ENCODE measurements at regions of chr14 and their contacts with region 1.

Region 1: GRCh38 chr14:64478634-64479250 is 13.4 kb downstream of the AKAP5 start:
- DNase-seq: no peak
- CTCF ChIP-seq: peak; percentile 27

Region 2: GRCh38 chr14:64345513-64345912 is 133.2 kb before region 1 on chr14:
- CTCF ChIA-PET with region 1: interaction called, 45 read pairs
- POLR2A ChIA-PET with region 1: no interaction called
- DNase-seq: no peak
- CTCF ChIP-seq: no peak

Region 3: DNA sequence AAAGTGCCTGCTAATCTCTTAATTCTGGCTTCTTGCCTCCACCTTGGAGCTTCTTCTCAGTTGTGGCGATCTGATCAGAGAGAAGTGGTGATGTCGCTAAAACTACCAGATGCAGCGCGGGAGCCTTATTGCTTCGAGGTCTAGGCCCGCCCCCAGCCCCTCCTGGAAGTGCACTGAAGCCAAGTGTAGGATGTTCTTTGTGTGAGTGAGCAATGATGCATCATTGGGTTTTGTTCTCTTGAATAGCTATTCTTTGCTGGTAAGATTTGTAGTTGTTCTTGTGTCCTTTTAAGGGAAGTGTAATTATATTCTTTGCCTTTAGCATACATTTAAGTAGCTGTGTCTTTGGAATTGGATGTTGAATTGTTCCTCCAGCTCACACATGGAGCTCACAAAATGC is 54.8 kb before region 1 on chr14:
- CTCF ChIA-PET with region 1: interaction called, 57 read pairs
- POLR2A ChIA-PET with region 1: no interaction called
- DNase-seq: no peak
- CTCF ChIP-seq: no peak

Region 4: DNA sequence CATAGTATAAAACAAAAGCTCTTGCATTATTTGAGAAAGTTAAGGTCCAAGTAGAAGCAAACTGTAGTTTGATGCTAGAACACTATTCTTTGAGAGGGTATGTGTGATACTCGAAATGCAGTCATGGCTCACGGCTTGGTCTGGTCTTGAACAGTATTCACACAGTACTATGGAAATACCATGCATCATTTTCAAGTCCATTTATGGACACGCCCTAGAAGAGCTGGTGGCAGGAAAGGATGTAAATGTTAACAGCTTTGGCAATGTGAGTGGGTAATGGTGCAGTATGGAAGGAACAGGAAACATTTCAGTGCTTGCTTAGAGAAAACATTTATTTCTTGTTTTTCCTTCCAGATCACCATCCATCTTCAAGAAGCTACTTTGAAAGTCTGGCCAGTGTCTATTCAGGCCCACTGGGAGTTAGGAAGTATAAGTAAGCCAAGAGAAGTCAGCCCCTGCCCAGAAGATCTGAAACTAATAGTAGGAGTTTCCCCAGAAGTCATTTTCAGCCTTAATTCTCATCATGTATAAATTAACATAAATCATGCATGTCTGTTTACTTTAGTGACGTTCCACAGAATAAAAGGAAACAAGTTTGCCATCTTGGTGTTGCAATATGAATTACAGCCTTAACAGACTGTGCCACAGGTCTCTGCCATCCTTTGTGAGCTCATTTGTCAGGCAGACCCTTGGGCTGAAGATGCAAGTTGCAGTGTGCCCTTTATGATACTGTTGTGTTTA is 19.2 kb before region 1 on chr14:
- CTCF ChIA-PET with region 1: interaction called, 10 read pairs
- POLR2A ChIA-PET with region 1: no interaction called
- DNase-seq: no peak
- CTCF ChIP-seq: no peak

Region 5: DNA sequence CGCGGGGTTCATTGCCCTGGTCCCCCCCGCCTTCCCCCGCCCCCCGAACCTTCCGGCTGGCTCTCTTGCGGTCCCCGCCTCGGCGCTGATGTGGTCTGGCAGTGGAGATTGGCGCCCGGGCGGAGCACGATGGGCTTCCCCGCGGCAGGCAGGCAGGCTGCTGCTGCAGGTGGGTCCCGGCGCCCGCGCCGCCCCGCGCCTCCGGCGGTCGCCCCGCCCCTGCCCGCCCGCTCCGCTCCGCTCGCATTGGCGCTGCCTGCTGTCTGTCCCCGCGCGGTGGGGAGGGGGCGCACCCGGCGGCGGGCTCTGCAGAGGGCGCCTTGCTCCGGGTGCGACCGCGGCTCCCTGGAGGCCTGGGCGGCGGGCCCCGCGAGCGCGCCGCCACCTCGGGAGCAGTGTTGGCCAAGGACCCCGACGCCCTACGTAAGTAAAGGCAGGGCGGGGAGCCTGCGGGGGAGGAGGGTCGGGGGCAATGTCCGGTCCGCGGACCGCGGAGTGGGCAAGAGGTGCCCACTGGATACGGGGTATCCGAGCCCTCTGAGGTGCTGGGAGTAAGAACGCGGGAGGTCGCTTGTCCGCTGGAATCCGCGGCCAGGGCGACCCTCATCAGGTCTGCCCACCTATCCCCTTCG is 13.4 kb before region 1 on chr14 and contains the start of gene AKAP5:
- CTCF ChIA-PET with region 1: interaction called, 19 read pairs
- POLR2A ChIA-PET with region 1: no interaction called
- DNase-seq: peak; percentile 78
- CTCF ChIP-seq: no peak

Region 6: GRCh38 chr14:64491637-64492036 is 12.9 kb after region 1 on chr14:
- CTCF ChIA-PET with region 1: interaction called, 38 read pairs
- POLR2A ChIA-PET with region 1: no interaction called
- DNase-seq: no peak
- CTCF ChIP-seq: no peak

Region 7: DNA sequence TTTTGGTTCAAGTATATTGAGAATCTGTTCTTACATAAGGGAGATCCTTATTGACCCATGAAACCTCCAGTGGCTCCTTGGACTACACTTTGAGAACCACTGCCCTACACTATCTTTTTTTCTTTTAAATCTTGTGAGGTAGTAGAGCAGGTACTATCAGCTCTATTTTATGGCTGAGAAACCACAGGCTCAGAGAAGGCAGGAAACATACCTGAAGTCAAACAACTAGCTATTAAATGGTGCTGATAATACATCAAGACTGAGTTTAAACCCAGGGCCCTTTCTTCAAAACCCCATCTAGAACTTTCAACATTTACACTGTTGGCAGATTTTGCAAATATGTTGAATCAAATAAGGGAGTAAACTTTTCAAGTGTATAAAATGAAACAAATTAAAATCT is 18.0 kb after region 1 on chr14:
- CTCF ChIA-PET with region 1: interaction called, 38 read pairs
- POLR2A ChIA-PET with region 1: no interaction called
- DNase-seq: no peak
- CTCF ChIP-seq: no peak